ENCODE measurements at regions of chr10 and their contacts with region 1.

Region 1: GRCh38 chr10:19930936-19931893 is 115.0 kb downstream of the PLXDC2 start:
- DNase-seq: no peak
- ATAC-seq: peak; percentile 60 to 87 (median 74)
- H3K4me3 ChIP-seq: no peak overlapping the region
- H3K27ac ChIP-seq: peak overlapping the region; percentile 49 to 81 (median 62)
- H3K4me1 ChIP-seq: peaks cover 0 to 48% (median 34%) of the 10 kb centered on the region in 9 donors
- H3K27me3 ChIP-seq: no peaks in the 10 kb centered on the region
- CTCF ChIP-seq: no peak

Region 2: DNA sequence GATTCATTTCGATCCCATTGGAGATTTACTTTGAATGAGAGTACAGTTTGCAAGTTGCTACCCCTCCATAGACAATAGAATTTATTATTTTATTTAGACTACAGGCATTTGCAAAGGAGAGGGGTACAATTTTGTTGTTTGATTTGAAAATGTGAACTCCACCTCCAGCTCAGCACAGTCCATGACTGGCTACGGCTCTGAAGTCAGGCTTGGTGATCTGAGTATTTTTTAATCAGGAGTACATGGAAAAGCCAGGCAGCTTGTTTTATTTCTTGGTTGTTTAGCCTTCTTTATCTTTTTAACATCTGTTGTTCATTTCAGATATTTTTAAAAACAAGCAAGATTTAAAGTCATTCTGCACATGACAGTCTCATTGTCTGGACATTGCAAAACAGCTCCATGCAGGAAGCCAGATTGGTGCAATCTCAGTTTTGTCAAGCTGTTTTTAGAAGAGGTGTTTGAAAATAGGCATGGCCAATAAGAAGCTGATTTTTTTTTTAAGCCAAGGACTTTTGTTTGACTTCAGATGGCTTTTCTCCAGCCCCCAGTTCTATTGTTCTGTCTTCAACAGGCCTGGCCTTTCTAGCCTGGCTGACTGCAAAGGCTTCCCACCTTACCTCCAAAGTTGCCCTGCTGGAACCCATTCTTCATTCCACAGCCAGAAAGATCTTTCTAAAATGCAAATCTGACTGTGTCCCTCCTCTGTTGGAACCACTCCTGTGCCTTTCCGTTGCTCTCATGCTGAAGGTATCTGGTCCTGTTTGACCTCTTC is 102.8 kb before region 1 on chr10:
- intact Hi-C with region 1: loop called in 1 of 10 experiments (anchors 5 kb)
- DNase-seq: peak in 1 of 2 donors; percentile 22
- ATAC-seq: peak; percentile 61 to 76 (median 68)
- H3K4me3 ChIP-seq: no peak overlapping the region
- H3K27ac ChIP-seq: peak overlapping the region in 8 of 10 donors; percentile 1 to 72 (median 48)
- H3K4me1 ChIP-seq: peaks cover 9 to 92% (median 80%) of the 10 kb centered on the region in 9 donors
- H3K27me3 ChIP-seq: no peaks in the 10 kb centered on the region
- CTCF ChIP-seq: no peak

Region 3: GRCh38 chr10:19966751-19967150 is 35.5 kb after region 1 on chr10:
- intact Hi-C with region 1: loop called in 1 of 10 experiments (anchors 5 kb)
- DNase-seq: no peak
- ATAC-seq: no peak
- H3K4me3 ChIP-seq: no peak overlapping the region
- H3K27ac ChIP-seq: no peak overlapping the region
- H3K4me1 ChIP-seq: peaks cover 2 to 60% (median 22%) of the 10 kb centered on the region in 9 donors
- H3K27me3 ChIP-seq: no peaks in the 10 kb centered on the region
- CTCF ChIP-seq: no peak

Measured in heart right ventricle (tissue), 16 donors.